ENCODE measurements at regions of chr17 and their contacts with region 1.

Region 1: DNA sequence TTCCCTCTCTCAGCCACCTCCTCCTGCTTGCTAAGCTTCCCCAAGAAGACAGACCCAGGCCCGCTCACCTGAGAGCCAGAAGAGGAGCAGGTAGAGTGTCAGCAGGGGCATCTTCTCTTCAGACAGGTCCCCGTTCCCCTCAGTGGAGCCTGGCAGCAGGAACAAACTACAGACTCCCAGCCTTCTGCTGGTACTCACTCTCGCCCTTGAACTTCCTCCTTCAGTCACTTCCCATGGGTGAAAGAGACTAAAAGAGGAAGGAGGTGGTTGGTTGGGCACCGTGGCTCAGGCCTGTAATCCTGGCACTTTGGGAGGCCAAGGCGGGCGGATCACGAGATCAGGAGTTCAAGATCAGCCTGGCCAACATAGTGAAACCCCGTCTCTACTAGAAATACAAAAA is at the start of gene CD300LF:
- H3K4me3 Mint-ChIP-seq: peak within 1 kb of the TSS; percentile 97
- H3K27ac Mint-ChIP-seq: peak within 1 kb of the TSS; percentile 86
- H3K4me1 Mint-ChIP-seq: peaks cover 47% of the 10 kb centered on the region
- H3K27me3 Mint-ChIP-seq: peaks cover 2% of the 10 kb centered on the region

Region 2: GRCh38 chr17:74573169-74573568 is 139.6 kb before region 1 on chr17:
- intact Hi-C with region 1: no loop called
- H3K4me3 Mint-ChIP-seq: no peak overlapping the region
- H3K27ac Mint-ChIP-seq: no peak overlapping the region
- H3K4me1 Mint-ChIP-seq: peaks cover 44% of the 10 kb centered on the region
- H3K27me3 Mint-ChIP-seq: peaks cover 40% of the 10 kb centered on the region

Region 3: DNA sequence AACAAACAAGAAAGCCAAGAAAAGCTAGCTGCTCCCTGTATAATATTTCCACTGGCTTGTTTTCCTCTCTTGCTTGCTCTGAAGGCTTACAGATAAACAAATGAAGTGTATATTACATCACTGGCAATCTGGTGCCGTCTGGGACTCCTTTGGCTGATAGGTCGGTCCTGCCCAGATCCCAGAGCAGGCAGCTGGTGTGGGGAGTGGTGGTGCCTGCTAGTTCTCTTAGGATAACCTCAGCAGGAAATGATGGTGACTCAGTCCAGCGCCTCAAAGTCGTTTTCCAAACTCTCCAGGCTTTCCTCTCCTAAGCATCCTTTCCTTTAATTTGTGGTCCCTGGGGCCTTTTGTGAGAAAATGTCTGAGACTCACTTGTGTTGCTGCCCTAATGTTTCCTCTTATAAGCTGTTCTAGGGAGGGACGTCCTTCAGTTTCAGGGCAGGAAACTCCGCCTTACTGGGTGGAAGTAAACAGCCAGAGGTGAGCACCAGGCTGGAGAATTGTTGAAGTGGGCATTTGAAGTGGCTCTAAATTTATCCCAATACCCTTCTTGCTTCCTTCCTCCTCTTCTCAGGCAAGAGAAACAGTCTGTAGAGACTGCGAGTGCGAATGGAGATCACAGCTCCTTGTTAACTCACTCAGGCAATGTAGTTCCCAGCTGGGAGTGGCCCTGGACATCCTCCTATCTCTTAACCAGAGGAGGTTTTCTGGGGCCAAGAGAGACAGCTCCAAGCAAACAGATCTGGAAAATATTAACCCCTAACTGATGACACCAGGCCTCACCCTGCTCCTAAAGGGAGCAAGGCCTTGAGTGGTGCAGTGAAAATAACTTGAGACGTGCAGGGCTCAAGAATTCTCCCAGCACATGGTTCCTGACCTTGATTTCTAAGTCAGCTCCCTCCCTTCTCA is 34.9 kb before region 1 on chr17:
- intact Hi-C with region 1: loop called (anchors 5 kb)
- H3K4me3 Mint-ChIP-seq: no peak overlapping the region
- H3K27ac Mint-ChIP-seq: no peak overlapping the region
- H3K4me1 Mint-ChIP-seq: peaks cover 56% of the 10 kb centered on the region
- H3K27me3 Mint-ChIP-seq: peaks cover 26% of the 10 kb centered on the region

Region 4: GRCh38 chr17:74770498-74771318 is 58.0 kb after region 1 on chr17:
- intact Hi-C with region 1: no loop called
- H3K4me3 Mint-ChIP-seq: no peak overlapping the region
- H3K27ac Mint-ChIP-seq: no peak overlapping the region
- H3K4me1 Mint-ChIP-seq: peaks cover 35% of the 10 kb centered on the region
- H3K27me3 Mint-ChIP-seq: no peaks in the 10 kb centered on the region

Measured in dendritic cell treated with granulocyte-macrophage colony-stimulating factor and Interleukin-4, amounts not matched to agents 40 ng/mL and 50 ng/mL, for 4 days (primary cell).